Left ventricle myocardium inferior (tissue), 1 donor: ENCODE measurements at regions of chr2 and their contacts with region 1.

Region 1: DNA sequence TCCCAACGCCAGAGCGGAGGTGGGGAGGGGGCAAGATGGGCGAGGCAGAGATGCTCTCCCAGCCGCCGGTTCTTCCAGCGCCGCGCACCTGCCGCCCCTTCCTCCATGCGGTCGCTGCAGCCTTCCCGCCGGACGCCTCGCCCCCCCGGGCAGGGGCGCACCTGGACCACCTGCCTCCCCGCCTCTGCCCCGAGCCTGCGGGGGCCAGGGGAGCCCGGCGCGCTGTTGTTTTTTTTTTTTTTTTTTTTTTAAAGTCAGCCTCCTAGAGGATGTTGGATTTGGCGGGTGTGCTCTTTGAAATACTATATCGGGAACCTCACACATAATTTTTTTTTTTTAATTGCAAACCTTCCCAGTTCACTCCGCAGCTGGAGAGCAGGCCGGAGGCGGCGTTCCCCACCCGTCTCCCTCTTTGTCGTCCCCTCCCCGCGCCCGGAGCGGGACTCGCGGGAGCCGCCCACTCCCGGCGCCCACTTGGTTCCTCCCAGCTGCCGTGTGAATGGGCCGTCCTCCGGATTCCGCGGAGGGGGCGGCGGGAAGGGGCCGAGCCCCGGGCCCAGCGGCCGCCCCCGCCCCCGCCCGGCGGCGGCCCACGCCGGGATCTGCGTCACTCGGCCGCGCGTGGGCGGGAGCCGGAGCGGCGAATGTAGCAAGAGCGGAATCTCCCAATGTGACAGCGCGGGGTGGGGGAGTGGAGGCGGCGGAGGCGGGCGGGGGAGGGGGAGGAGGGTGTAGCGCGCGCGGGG is 421 bp upstream of the NAB1 start:
- DNase-seq: peak; percentile 94
- H3K4me3 ChIP-seq: peak overlapping the region; percentile 94
- H3K27ac ChIP-seq: peak overlapping the region; percentile 98
- H3K4me1 ChIP-seq: peaks cover 57% of the 10 kb centered on the region
- H3K27me3 ChIP-seq: no peaks in the 10 kb centered on the region
- CTCF ChIP-seq: peak; percentile 7

Region 2: DNA sequence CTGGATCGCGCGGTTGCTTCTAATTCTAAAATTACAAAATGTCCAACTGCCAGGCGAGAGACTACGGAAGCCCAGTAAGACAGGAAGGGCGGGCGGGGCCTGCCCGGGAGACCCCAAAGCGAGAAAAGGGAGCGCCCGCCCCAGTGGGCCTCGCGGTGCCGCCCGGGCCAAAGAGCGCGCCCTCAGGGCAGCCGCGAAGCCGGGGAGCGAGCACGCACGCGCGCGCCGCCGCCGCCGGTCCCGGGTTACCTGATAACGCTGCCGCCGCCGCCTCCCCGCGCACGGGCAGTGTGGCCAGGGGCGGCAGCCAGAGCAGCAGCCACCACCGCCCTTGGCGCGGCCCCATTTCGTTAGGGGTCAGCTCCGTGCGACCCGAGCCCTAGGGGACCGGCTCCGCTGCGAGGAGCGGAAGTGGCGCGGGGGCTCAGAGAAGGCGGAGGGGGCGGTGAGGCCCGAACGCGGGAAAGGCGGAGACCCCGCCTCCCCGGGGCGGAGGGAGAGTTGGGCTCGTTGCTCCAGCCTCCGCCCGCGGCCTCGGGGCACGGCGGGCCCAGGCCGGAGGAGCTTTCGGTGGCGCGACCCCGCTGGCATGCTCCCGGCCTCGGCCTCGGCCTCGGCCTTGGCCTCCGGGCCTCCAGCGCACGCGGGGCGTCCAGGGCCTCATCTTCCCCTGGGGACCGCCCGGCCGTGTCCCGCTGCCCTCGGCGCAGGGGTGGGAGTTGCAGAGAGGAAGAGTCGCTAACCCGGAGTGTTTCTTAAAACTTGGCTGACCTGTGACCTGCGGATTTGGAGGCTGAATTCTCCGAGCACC is 113.9 kb before region 1 on chr2 and contains the start of gene NEMP2:
- intact Hi-C with region 1: loop called (anchors 5 kb)
- DNase-seq: peak; percentile 88
- H3K4me3 ChIP-seq: peak within 1 kb of the TSS; percentile 81
- H3K27ac ChIP-seq: peak within 1 kb of the TSS; percentile 98
- H3K4me1 ChIP-seq: peaks cover 49% of the 10 kb centered on the region
- H3K27me3 ChIP-seq: no peaks in the 10 kb centered on the region
- CTCF ChIP-seq: peak; percentile 30
- total RNA-seq, gene NEMP2: 1.5 TPM

Region 3: DNA sequence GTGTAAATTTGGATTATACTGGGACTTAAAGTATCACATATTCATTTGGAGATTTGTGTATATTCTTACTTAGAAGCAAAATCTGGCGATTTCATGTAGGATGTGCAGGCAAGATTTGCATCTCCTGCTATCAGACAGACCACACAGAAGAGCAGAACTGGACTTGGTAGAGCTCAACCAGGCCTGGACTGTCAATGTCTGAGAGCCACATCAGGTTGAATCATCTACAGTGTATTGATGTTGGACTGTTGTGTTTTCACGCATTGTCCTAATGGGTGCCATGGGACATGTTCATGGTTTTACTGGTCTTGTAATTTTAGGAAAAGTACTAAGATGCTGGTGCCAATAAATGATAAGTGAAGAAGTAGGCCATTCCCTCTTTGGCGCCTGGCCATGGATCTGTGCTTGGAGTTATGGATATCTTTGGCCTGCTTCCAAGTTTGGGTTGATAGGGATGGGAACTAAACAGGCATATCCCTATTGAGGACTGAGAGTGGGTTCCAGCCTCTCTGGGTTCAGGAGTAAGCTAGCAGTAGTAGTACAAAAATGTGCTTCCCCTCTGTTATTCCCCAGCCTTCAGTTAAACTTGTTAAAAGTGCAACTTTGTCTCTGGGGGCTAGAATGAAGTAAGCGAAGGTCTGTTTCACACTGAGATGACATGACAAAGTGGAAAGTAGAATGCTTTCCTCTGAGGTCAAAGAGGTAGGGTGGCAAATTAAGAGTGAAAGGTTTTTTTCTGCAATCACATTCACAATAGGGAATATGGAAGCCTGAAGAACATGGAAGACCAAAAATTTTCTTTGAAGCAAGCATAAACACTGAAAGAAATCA is 64.7 kb before region 1 on chr2:
- intact Hi-C with region 1: loop called (anchors 10 kb)
- DNase-seq: peak; percentile 64
- H3K4me3 ChIP-seq: no peak overlapping the region
- H3K27ac ChIP-seq: peak overlapping the region; percentile 73
- H3K4me1 ChIP-seq: peaks cover 55% of the 10 kb centered on the region
- H3K27me3 ChIP-seq: no peaks in the 10 kb centered on the region
- CTCF ChIP-seq: no peak